CD4-positive, alpha-beta T cell (primary cell): ENCODE measurements at regions of chr20 and their contacts with region 1.

Region 1: DNA sequence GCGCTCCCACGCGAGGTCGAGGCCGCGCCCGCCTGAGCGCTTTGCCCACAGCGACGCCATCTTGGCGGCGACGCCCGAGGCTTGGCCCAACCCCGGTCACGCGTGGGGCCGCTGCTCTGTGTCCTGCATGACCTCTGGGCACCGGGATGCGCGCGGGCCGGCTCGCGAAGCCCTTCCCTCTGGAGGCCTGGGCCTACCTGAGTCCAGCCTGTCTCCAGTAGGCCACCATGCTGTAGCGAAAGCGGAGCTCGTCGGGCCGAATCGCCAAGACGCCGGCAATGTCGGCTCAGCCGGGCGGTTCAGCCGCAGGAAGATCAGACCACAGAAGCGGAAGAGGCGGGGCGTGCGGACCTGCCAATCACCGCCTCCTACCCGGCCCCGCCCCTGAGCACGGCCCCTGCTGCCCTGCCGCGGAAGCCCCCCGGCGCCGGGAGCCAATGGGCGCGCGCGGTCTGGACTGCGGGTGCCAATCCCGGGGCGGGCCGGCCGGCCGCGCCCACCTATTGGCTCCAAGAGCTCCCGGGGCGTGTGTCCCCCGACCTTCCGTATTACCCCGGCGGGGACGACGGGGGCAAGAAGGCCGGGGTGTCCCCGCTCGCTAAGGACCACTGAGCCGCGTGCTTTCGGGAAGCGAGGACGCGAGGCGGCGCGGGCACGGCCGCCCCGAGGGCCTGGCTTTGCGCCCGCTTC is at the start of gene ATP5F1E:
- DNase-seq: peak; percentile 94 to 99 (median 96)
- ATAC-seq: peak; percentile 95
- H3K4me3 ChIP-seq: peak within 1 kb of the TSS; percentile 76
- H3K4me3 Mint-ChIP-seq: peak within 1 kb of the TSS; percentile 97
- H3K27ac ChIP-seq: peak within 1 kb of the TSS; percentile 81 to 86
- H3K27ac Mint-ChIP-seq: peak within 1 kb of the TSS; percentile 87
- H3K4me1 ChIP-seq: peaks cover 31% of the 10 kb centered on the region
- H3K4me1 Mint-ChIP-seq: peaks cover 61% of the 10 kb centered on the region
- H3K27me3 ChIP-seq: no peaks in the 10 kb centered on the region
- H3K27me3 Mint-ChIP-seq: no peaks in the 10 kb centered on the region
- CTCF ChIP-seq: no peak
- total RNA-seq, gene ATP5F1E: 51.1 to 53.1 TPM

Region 2: GRCh38 chr20:58980700-58981627 is 51.2 kb before region 1 on chr20 and contains the start of gene NELFCD:
- CTCF ChIA-PET with region 1: interaction called, 4 read pairs
- POLR2A ChIA-PET with region 1: interaction called, 9 read pairs
- intact Hi-C with region 1: loop called (anchors 1 to 2 kb)
- DNase-seq: peak; percentile 79 to 95 (median 88)
- ATAC-seq: peak; percentile 92
- H3K4me3 ChIP-seq: peak within 1 kb of the TSS; percentile 82
- H3K4me3 Mint-ChIP-seq: peak within 1 kb of the TSS; percentile 92
- H3K27ac ChIP-seq: peak within 1 kb of the TSS; percentile 41 to 52
- H3K27ac Mint-ChIP-seq: peak within 1 kb of the TSS; percentile 87
- H3K4me1 ChIP-seq: peaks cover 42% of the 10 kb centered on the region
- H3K4me1 Mint-ChIP-seq: peaks cover 43% of the 10 kb centered on the region
- H3K27me3 ChIP-seq: no peaks in the 10 kb centered on the region
- H3K27me3 Mint-ChIP-seq: no peaks in the 10 kb centered on the region
- CTCF ChIP-seq: no peak
- total RNA-seq, gene NELFCD: 95.7 to 97.0 TPM

Region 3: GRCh38 chr20:59042796-59043660 is 10.9 kb after region 1 on chr20:
- CTCF ChIA-PET with region 1: interaction called, 4 read pairs
- POLR2A ChIA-PET with region 1: interaction called, 67 read pairs
- intact Hi-C with region 1: loop called (anchors 1 kb)
- DNase-seq: peak; percentile 87 to 97 (median 94)
- ATAC-seq: peak; percentile 94
- H3K4me3 ChIP-seq: peak overlapping the region; percentile 85
- H3K4me3 Mint-ChIP-seq: peak overlapping the region; percentile 92
- H3K27ac ChIP-seq: peak overlapping the region; percentile 67 to 77
- H3K27ac Mint-ChIP-seq: peak overlapping the region; percentile 91
- H3K4me1 ChIP-seq: peaks cover 41% of the 10 kb centered on the region
- H3K4me1 Mint-ChIP-seq: peaks cover 48% of the 10 kb centered on the region
- H3K27me3 ChIP-seq: no peaks in the 10 kb centered on the region
- H3K27me3 Mint-ChIP-seq: no peaks in the 10 kb centered on the region
- CTCF ChIP-seq: no peak

Region 4: GRCh38 chr20:59149651-59150504 is 117.7 kb after region 1 on chr20:
- CTCF ChIA-PET with region 1: no interaction called
- POLR2A ChIA-PET with region 1: interaction called, 11 read pairs
- intact Hi-C with region 1: loop called (anchors 5 kb)
- DNase-seq: peak; percentile 52 to 94 (median 72)
- ATAC-seq: peak; percentile 79
- H3K4me3 ChIP-seq: peak overlapping the region; percentile 21
- H3K4me3 Mint-ChIP-seq: peak overlapping the region; percentile 82
- H3K27ac ChIP-seq: peak overlapping the region; percentile 95 to 96
- H3K27ac Mint-ChIP-seq: peak overlapping the region; percentile 97
- H3K4me1 ChIP-seq: peaks cover 99% of the 10 kb centered on the region
- H3K4me1 Mint-ChIP-seq: peaks cover 95% of the 10 kb centered on the region
- H3K27me3 ChIP-seq: no peaks in the 10 kb centered on the region
- H3K27me3 Mint-ChIP-seq: no peaks in the 10 kb centered on the region
- CTCF ChIP-seq: no peak

Region 5: GRCh38 chr20:59222253-59223181 is 190.3 kb after region 1 on chr20:
- CTCF ChIA-PET with region 1: interaction called, 5 read pairs
- POLR2A ChIA-PET with region 1: interaction called, 11 read pairs
- intact Hi-C with region 1: no loop called
- DNase-seq: peak; percentile 72 to 87 (median 78)
- ATAC-seq: peak; percentile 94
- H3K4me3 ChIP-seq: peak overlapping the region; percentile 46
- H3K4me3 Mint-ChIP-seq: peak overlapping the region; percentile 86
- H3K27ac ChIP-seq: no peak overlapping the region
- H3K27ac Mint-ChIP-seq: peak overlapping the region; percentile 87
- H3K4me1 ChIP-seq: peaks cover 16% of the 10 kb centered on the region
- H3K4me1 Mint-ChIP-seq: peaks cover 51% of the 10 kb centered on the region
- H3K27me3 ChIP-seq: no peaks in the 10 kb centered on the region
- H3K27me3 Mint-ChIP-seq: no peaks in the 10 kb centered on the region
- CTCF ChIP-seq: peak; percentile 93